CD8-positive, alpha-beta memory T cell (primary cell): ENCODE measurements at regions of chr20 and their contacts with region 1.

Region 1: GRCh38 chr20:59207742-59208357 is 44.2 kb downstream of the ZNF831 start:
- DNase-seq: peak; percentile 71 to 88 (median 71)
- H3K4me3 ChIP-seq: no peak overlapping the region
- H3K4me3 Mint-ChIP-seq: peak overlapping the region in 1 of 7 donors; percentile 42
- H3K27ac ChIP-seq: no peak overlapping the region
- H3K27ac Mint-ChIP-seq: peak overlapping the region; percentile 30 to 96 (median 82)
- H3K4me1 ChIP-seq: peaks cover 21% of the 10 kb centered on the region
- H3K4me1 Mint-ChIP-seq: peaks cover 43 to 47% (median 44%) of the 10 kb centered on the region in 3 donors
- H3K27me3 ChIP-seq: no peaks in the 10 kb centered on the region
- H3K27me3 Mint-ChIP-seq: no peaks in the 10 kb centered on the region

Region 2: DNA sequence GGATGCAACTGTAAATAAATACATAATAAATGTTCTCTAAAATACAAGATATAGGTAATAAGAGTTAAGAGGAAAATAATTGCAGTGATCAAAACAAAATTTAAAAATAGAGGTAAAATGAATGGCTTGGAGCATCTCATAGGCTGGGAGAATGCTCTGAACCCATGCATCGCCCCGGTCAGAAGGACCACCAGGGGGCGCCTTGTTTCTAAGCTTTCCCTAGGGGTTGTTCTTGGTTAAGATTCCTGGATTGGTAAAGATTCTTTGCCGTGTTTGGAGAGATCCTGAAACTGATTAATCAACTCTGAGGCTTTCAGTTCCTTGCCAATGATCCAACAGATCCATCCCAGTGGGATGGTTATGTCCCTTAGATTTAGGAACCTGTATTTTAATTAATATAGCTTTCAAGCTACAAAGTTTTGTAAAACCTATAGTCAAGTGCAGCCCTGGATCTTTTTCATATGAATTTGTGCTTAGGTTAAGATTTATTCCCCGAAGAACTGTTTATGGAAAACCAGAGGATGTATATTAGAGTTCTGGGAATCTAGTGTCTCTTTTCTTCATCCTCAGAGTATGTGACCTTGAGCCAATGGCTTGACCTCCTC is 119.9 kb before region 1 on chr20:
- CTCF ChIA-PET with region 1: interaction called, 95 read pairs
- POLR2A ChIA-PET with region 1: interaction called, 4 read pairs
- DNase-seq: peak; percentile 71 to 88 (median 81)
- H3K4me3 ChIP-seq: no peak overlapping the region
- H3K4me3 Mint-ChIP-seq: no peak overlapping the region
- H3K27ac ChIP-seq: no peak overlapping the region
- H3K27ac Mint-ChIP-seq: peak overlapping the region in 4 of 8 donors; percentile 15 to 54 (median 50)
- H3K4me1 ChIP-seq: peaks cover 7% of the 10 kb centered on the region
- H3K4me1 Mint-ChIP-seq: peaks cover 4 to 6% (median 6%) of the 10 kb centered on the region in 3 donors
- H3K27me3 ChIP-seq: no peaks in the 10 kb centered on the region
- H3K27me3 Mint-ChIP-seq: peaks cover 3 to 8% of the 10 kb centered on the region in 2 donors

Region 3: GRCh38 chr20:59094576-59094975 is 113.3 kb before region 1 on chr20:
- CTCF ChIA-PET with region 1: interaction called, 95 read pairs
- POLR2A ChIA-PET with region 1: no interaction called
- DNase-seq: no peak
- H3K4me3 ChIP-seq: no peak overlapping the region
- H3K4me3 Mint-ChIP-seq: no peak overlapping the region
- H3K27ac ChIP-seq: no peak overlapping the region
- H3K27ac Mint-ChIP-seq: no peak overlapping the region
- H3K4me1 ChIP-seq: no peaks in the 10 kb centered on the region
- H3K4me1 Mint-ChIP-seq: peaks cover 3 to 5% (median 4%) of the 10 kb centered on the region in 3 donors
- H3K27me3 ChIP-seq: no peaks in the 10 kb centered on the region
- H3K27me3 Mint-ChIP-seq: no peaks in the 10 kb centered on the region

Region 4: DNA sequence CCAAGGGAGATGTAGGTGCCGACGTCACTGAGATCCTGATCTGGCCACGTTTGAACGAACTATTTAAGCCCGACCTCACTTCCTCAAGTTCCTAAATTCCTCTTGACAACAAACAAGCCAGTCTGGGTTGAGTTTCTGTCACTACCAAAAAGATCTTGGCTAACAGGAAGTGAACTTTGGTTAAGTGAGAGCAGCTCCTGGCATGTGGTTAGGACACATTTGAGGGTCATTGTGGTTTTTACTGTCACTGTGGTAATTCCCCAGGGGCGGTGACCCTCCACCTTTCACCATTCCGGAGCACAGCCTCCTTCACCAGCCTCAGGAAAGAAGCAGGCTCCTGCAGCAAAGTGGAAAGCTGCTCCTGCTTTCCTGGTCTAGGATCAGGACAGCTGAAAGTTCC is 87.4 kb before region 1 on chr20:
- CTCF ChIA-PET with region 1: interaction called, 37 read pairs
- POLR2A ChIA-PET with region 1: interaction called, 4 read pairs
- DNase-seq: peak in 4 of 5 donors; percentile 18 to 69 (median 51)
- H3K4me3 ChIP-seq: no peak overlapping the region
- H3K4me3 Mint-ChIP-seq: peak overlapping the region; percentile 3 to 87 (median 59)
- H3K27ac ChIP-seq: peak overlapping the region; percentile 44
- H3K27ac Mint-ChIP-seq: peak overlapping the region; percentile 95 to 100 (median 99)
- H3K4me1 ChIP-seq: peaks cover 78% of the 10 kb centered on the region
- H3K4me1 Mint-ChIP-seq: peaks cover 71 to 87% (median 84%) of the 10 kb centered on the region in 3 donors
- H3K27me3 ChIP-seq: no peaks in the 10 kb centered on the region
- H3K27me3 Mint-ChIP-seq: peaks cover 0 to 2% of the 10 kb centered on the region in 2 donors

Region 5: DNA sequence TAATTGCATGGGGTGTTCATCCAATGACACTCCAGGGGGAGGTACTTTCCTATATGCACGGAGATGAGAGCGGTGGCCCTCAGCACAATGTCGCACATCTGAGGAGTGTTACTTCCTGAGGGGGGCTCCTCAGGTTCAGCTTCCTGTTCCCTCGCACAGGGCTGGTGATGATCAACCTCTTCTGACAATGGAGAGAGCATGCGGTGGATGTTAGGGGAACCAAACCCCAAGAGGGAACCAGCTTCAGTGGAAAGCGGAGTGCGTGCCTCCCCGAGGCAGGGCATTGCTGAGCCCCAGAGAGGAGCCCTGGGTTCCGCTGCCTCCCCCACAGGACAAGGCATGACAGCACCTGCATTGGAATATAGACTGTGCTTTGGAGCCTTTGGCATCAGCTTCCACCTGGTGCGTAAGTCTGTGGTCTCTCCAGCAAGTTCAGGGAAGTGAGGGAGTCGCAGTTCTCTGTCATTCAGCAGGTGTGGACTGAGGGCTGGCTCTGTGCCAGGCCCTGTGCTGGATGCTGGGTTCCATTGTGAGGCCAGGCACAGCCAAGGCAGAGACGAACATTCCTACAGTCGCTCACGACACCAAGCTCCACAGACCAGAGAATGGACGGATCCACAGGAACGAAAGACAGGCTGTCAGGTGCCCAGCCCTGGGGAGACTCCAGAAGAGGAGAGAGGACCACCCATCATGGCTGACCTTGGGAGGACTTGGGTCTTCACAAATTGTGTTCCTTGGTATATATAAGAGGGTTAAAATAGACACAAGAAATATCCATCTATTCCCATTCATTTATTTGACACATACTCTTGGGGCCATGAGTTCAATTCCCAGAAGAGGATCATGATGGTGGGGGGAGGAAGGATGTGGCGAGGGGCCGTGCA is 48.1 kb before region 1 on chr20:
- CTCF ChIA-PET with region 1: interaction called, 20 read pairs
- POLR2A ChIA-PET with region 1: no interaction called
- DNase-seq: peak; percentile 74 to 93 (median 87)
- H3K4me3 ChIP-seq: peak overlapping the region; percentile 92
- H3K4me3 Mint-ChIP-seq: peak overlapping the region; percentile 88 to 95 (median 92)
- H3K27ac ChIP-seq: peak overlapping the region; percentile 98
- H3K27ac Mint-ChIP-seq: peak overlapping the region; percentile 95 to 100 (median 98)
- H3K4me1 ChIP-seq: peaks cover 80% of the 10 kb centered on the region
- H3K4me1 Mint-ChIP-seq: peaks cover 70 to 95% (median 88%) of the 10 kb centered on the region in 3 donors
- H3K27me3 ChIP-seq: no peaks in the 10 kb centered on the region
- H3K27me3 Mint-ChIP-seq: peaks cover 0 to 2% of the 10 kb centered on the region in 2 donors

Region 6: DNA sequence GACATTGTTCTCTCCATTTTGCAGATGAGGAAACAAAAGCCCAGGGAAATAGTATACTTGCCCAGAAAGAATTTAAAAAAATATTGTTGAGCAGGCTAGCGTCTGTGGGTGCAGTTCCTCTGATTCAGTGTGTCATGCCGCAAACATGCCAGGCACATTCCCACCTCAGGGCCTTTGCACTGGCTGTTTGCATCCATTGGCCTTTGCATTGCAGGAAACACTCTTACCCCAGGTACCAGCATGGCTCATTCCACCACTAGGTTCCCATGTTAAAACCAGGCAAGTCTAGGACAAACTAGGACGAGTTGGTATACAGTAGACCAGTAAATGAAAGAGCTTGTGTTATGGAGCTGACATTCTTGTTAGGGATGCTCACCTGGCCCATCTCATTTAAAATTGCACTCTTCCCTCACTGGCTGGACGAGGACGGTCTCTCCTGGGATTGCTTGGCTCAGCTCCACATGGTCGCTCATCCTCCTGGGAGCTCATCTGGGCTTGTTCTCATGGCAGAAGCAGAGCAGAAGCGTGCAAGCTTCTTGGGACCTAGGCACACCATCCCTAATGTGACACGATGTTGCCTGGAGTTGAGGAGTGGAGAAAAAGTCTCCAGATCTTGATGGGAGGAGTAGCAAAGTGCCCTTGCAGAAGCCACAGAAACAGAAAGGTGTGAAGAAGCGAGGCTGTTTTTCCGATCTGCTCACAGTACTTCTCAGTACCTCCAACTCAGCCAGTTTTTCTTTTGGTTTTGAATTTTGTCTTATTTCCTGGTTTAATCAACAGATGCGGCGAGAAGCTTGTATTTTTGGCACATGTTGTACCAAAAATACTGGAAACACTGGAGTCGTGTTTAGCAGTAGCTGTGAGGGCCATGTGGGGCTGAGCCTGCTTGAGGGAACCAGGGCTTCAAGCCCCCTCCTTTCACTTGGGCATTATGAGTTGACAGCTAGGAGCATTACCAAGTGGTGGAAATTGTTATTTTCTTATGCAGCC is 30.3 kb before region 1 on chr20:
- CTCF ChIA-PET with region 1: interaction called, 13 read pairs
- POLR2A ChIA-PET with region 1: no interaction called
- DNase-seq: peak in 4 of 5 donors; percentile 21 to 75 (median 46)
- H3K4me3 ChIP-seq: peak overlapping the region; percentile 58
- H3K4me3 Mint-ChIP-seq: peak overlapping the region; percentile 72 to 91 (median 87)
- H3K27ac ChIP-seq: peak overlapping the region; percentile 51
- H3K27ac Mint-ChIP-seq: peak overlapping the region; percentile 90 to 99 (median 98)
- H3K4me1 ChIP-seq: peaks cover 83% of the 10 kb centered on the region
- H3K4me1 Mint-ChIP-seq: peaks cover 91 to 99% (median 99%) of the 10 kb centered on the region in 3 donors
- H3K27me3 ChIP-seq: no peaks in the 10 kb centered on the region
- H3K27me3 Mint-ChIP-seq: peaks cover 0 to 2% of the 10 kb centered on the region in 2 donors

Region 7: GRCh38 chr20:59222253-59223181 is 14.7 kb after region 1 on chr20:
- CTCF ChIA-PET with region 1: interaction called, 28 read pairs
- POLR2A ChIA-PET with region 1: no interaction called
- DNase-seq: peak; percentile 64 to 83 (median 68)
- H3K4me3 ChIP-seq: peak overlapping the region; percentile 38
- H3K4me3 Mint-ChIP-seq: peak overlapping the region; percentile 67 to 81 (median 74)
- H3K27ac ChIP-seq: no peak overlapping the region
- H3K27ac Mint-ChIP-seq: peak overlapping the region in 7 of 8 donors; percentile 6 to 91 (median 77)
- H3K4me1 ChIP-seq: peaks cover 16% of the 10 kb centered on the region
- H3K4me1 Mint-ChIP-seq: peaks cover 18 to 40% (median 20%) of the 10 kb centered on the region in 3 donors
- H3K27me3 ChIP-seq: no peaks in the 10 kb centered on the region
- H3K27me3 Mint-ChIP-seq: no peaks in the 10 kb centered on the region

Region 8: DNA sequence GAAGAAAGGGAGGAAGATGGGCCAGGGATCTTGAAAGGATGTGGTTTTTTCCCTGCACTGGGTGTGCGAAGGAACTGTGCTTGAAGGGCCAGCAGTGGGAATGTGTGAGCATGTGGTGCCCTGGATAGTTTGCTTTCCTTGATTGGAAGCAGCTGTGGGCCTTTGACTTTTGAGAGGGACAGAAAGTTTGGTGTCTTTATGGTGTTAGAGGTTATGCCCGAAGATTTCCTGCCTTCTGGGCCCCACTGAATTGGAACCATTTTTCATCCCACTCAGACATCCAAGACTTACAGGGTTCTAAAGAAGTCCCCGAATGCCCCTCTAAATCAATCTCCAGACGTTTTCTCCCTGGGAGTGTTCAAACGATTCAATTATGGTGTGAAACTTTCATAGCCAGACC is 69.1 kb after region 1 on chr20:
- CTCF ChIA-PET with region 1: no interaction called
- POLR2A ChIA-PET with region 1: no interaction called
- DNase-seq: no peak
- H3K4me3 ChIP-seq: no peak overlapping the region
- H3K4me3 Mint-ChIP-seq: no peak overlapping the region
- H3K27ac ChIP-seq: no peak overlapping the region
- H3K27ac Mint-ChIP-seq: no peak overlapping the region
- H3K4me1 ChIP-seq: peaks cover 12% of the 10 kb centered on the region
- H3K4me1 Mint-ChIP-seq: peaks cover 8 to 16% (median 9%) of the 10 kb centered on the region in 3 donors
- H3K27me3 ChIP-seq: no peaks in the 10 kb centered on the region
- H3K27me3 Mint-ChIP-seq: peaks cover 17 to 21% of the 10 kb centered on the region in 2 donors